ENCODE measurements at regions of chr1 and their contacts with region 1.

Region 1: DNA sequence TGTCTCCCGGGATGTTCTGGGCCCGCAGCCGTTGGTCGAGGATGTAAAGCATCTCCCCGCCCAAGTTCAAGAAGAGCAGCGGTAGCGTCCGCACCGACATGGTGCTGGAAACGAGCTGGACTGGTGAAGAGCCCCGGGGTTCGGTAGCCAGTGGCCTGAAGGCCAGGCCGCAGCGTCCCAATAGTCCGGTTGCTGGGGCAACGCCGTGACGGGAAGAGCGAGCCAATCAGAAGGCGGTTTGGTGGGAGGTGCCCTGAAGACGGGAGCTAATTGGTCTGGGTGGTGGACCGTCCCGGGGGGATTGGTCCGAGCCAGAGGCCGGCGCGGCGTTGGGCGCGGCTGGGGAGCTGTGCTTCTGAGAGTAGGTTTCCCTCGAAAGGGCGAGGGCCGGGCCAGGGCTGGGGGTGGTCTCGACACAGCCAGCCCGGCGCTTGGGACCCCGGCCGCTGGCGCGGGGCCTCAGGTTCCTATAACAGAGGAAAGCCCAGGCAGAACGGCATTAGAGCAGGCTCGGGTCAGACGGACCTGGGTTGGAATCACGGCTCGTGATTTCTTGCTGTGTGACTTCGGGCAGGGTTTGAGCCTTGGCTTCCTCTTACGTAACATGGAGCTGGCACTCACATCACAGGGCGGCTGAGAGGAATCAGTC is at the start of gene OSCP1:
- DNase-seq: peak; percentile 69 to 94 (median 81)
- ATAC-seq: peak; percentile 96 to 99 (median 98)
- H3K4me3 ChIP-seq: peak within 1 kb of the TSS; percentile 62 to 80
- H3K4me3 Mint-ChIP-seq: peak within 1 kb of the TSS; percentile 85 to 88 (median 87)
- H3K27ac ChIP-seq: peak within 1 kb of the TSS; percentile 77
- H3K27ac Mint-ChIP-seq: peak within 1 kb of the TSS; percentile 87 to 94
- H3K4me1 ChIP-seq: peaks cover 0 to 13% of the 10 kb centered on the region in 2 experiments
- H3K4me1 Mint-ChIP-seq: peaks cover 17 to 24% (median 22%) of the 10 kb centered on the region in 3 donors
- H3K27me3 ChIP-seq: no peaks in the 10 kb centered on the region
- H3K27me3 Mint-ChIP-seq: no peaks in the 10 kb centered on the region
- total RNA-seq, gene OSCP1: 0.32 to 1.3 (median 0.68) TPM

Region 2: GRCh38 chr1:36411674-36412520 is 38.5 kb before region 1 on chr1:
- CTCF ChIA-PET with region 1: no interaction called
- POLR2A ChIA-PET with region 1: interaction called in 1 of 2 experiments, 13 read pairs
- DNase-seq: peak in 21 of 35 experiments; percentile 5 to 80 (median 29)
- ATAC-seq: peak; percentile 42 to 98 (median 50)
- H3K4me3 ChIP-seq: no peak overlapping the region
- H3K4me3 Mint-ChIP-seq: peak overlapping the region in 1 of 3 donors; percentile 40
- H3K27ac ChIP-seq: no peak overlapping the region
- H3K27ac Mint-ChIP-seq: peak overlapping the region; percentile 63 to 77
- H3K4me1 ChIP-seq: peaks cover 0 to 6% of the 10 kb centered on the region in 2 experiments
- H3K4me1 Mint-ChIP-seq: peaks cover 9 to 18% (median 14%) of the 10 kb centered on the region in 3 donors
- H3K27me3 ChIP-seq: peaks cover 0 to 3% of the 10 kb centered on the region in 2 experiments
- H3K27me3 Mint-ChIP-seq: no peaks in the 10 kb centered on the region

Measured in T-cell (primary cell).